Naive thymus-derived CD8-positive, alpha-beta T cell (primary cell): ENCODE measurements at regions of chr6 and their contacts with region 1.

Region 1: DNA sequence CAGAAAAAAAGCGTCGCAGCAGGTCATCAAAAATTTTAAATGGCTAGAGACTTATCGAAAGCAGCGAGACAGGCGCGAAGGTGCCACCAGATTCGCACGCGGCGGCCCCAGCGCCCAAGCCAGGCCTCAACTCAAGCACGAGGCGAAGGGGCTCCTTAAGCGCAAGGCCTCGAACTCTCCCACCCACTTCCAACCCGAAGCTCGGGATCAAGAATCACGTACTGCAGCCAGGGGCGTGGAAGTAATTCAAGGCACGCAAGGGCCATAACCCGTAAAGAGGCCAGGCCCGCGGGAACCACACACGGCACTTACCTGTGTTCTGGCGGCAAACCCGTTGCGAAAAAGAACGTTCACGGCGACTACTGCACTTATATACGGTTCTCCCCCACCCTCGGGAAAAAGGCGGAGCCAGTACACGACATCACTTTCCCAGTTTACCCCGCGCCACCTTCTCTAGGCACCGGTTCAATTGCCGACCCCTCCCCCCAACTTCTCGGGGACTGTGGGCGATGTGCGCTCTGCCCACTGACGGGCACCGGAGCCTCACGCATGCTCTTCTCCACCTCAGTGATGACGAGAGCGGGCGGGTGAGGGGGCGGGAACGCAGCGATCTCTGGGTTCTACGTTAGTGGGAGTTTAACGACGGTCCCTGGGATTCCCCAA is at the start of gene EEF1A1:
- DNase-seq: peak; percentile 95 to 100 (median 99)
- ATAC-seq: peak; percentile 74 to 79
- H3K4me3 Mint-ChIP-seq: peak within 1 kb of the TSS; percentile 90 to 98 (median 95)
- H3K27ac Mint-ChIP-seq: peak within 1 kb of the TSS; percentile 95 to 99 (median 98)
- H3K4me1 Mint-ChIP-seq: peaks cover 28 to 68% (median 63%) of the 10 kb centered on the region in 4 donors
- H3K27me3 Mint-ChIP-seq: peaks cover 0 to 3% (median 0%) of the 10 kb centered on the region in 5 donors
- polyA plus RNA-seq, gene EEF1A1: 14,095 to 14,658 (median 14,646) TPM

Region 2: GRCh38 chr6:73461537-73462350 is 59.1 kb before region 1 on chr6 and contains the start of gene MTO1:
- POLR2A ChIA-PET with region 1: interaction called, 60 read pairs
- DNase-seq: peak; percentile 66 to 91 (median 81)
- ATAC-seq: peak; percentile 93 to 95
- H3K4me3 Mint-ChIP-seq: peak within 1 kb of the TSS; percentile 93 to 100 (median 97)
- H3K27ac Mint-ChIP-seq: peak within 1 kb of the TSS; percentile 94 to 99 (median 98)
- H3K4me1 Mint-ChIP-seq: peaks cover 4 to 49% (median 29%) of the 10 kb centered on the region in 4 donors
- H3K27me3 Mint-ChIP-seq: no peaks in the 10 kb centered on the region
- polyA plus RNA-seq, gene MTO1: 23.6 to 33.0 (median 25.0) TPM

Region 3: GRCh38 chr6:73580247-73581149 is 59.7 kb after region 1 on chr6:
- POLR2A ChIA-PET with region 1: interaction called, 198 read pairs
- DNase-seq: peak in 7 of 10 donors; percentile 7 to 66 (median 22)
- ATAC-seq: peak; percentile 44 to 86
- H3K4me3 Mint-ChIP-seq: peak overlapping the region; percentile 54 to 82 (median 74)
- H3K27ac Mint-ChIP-seq: peak overlapping the region; percentile 81 to 95 (median 90)
- H3K4me1 Mint-ChIP-seq: peaks cover 7 to 44% (median 17%) of the 10 kb centered on the region in 4 donors
- H3K27me3 Mint-ChIP-seq: no peaks in the 10 kb centered on the region

Region 4: DNA sequence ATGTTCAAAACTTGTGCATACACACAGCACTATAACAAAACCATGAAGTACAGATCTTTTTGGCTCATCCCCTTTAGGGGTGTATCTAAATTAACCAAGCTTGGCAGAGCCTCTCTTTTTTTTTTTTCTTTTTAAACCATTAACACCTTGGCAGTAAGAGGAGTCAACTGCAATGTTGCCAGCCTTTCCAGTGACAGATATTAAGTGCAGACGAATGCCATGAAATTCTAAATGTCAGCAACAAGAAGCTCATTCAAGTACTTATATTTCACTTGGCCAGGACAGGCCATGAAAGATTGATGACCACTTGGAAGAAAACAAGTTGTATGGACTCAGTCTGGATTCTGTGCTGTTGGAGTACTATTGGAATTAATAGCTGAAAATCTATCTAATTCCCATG is 83.2 kb after region 1 on chr6:
- POLR2A ChIA-PET with region 1: interaction called, 14 read pairs
- DNase-seq: no peak
- ATAC-seq: no peak
- H3K4me3 Mint-ChIP-seq: no peak overlapping the region
- H3K27ac Mint-ChIP-seq: no peak overlapping the region
- H3K4me1 Mint-ChIP-seq: peaks cover 0 to 1% (median 0%) of the 10 kb centered on the region in 4 donors
- H3K27me3 Mint-ChIP-seq: no peaks in the 10 kb centered on the region

Region 5: DNA sequence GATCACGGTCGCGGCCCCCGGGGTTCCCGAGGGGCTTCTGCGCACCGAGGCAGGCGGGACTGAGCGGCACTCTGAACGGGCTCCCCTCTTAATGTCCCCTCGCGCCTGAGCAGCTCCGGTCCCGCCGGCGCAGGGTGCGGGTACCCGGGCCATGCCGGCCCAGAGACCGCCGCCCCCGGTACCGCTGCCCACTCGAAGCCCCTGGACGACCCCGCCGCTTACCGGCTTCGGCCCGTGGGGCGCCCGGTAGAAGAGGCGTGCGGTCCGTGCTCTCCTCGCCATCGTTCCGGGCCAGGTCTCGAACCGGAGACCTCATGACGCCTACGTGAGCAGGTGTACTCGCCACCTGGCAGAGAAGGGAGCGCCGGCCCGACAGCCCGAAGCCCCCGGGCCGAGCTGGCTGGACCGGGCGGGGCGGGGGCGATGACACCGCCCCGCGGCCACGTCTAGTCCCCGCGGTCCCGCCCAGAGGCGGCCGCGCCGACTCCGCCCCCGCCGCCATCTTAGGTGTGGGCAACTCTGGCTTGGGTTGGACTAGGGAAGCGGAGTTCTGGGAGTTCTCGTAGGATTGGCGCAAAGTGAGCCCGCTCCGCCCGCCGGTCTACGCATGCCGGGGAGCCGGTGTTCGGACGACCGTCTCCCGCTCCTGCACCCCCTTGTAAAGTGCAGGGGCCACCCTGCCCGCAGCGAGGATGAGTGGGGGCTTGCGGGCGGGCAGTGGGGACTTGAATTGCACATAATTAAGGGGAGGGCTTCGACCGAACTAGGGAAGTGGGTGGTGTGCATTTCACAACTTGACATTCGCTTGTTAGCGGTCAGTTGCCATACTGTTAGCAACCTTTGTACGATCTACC is 133.0 kb after region 1 on chr6 and contains the start of gene SLC17A5:
- POLR2A ChIA-PET with region 1: interaction called, 90 read pairs
- DNase-seq: peak; percentile 78 to 93 (median 86)
- ATAC-seq: peak; percentile 86
- H3K4me3 Mint-ChIP-seq: peak within 1 kb of the TSS; percentile 91 to 99 (median 99)
- H3K27ac Mint-ChIP-seq: peak within 1 kb of the TSS; percentile 85 to 99 (median 98)
- H3K4me1 Mint-ChIP-seq: peaks cover 12 to 36% (median 30%) of the 10 kb centered on the region in 4 donors
- H3K27me3 Mint-ChIP-seq: no peaks in the 10 kb centered on the region
- polyA plus RNA-seq, gene SLC17A5: 4.9 to 8.8 (median 6.5) TPM

Region 6: GRCh38 chr6:74050921-74051320 is 530.1 kb after region 1 on chr6:
- POLR2A ChIA-PET with region 1: no interaction called
- DNase-seq: no peak
- ATAC-seq: no peak
- H3K4me3 Mint-ChIP-seq: no peak overlapping the region
- H3K27ac Mint-ChIP-seq: no peak overlapping the region
- H3K4me1 Mint-ChIP-seq: no peaks in the 10 kb centered on the region
- H3K27me3 Mint-ChIP-seq: peaks cover 0 to 8% (median 0%) of the 10 kb centered on the region in 5 donors